A549 (cell line): ENCODE measurements at regions of chr3 and their contacts with region 1.

Region 1: DNA sequence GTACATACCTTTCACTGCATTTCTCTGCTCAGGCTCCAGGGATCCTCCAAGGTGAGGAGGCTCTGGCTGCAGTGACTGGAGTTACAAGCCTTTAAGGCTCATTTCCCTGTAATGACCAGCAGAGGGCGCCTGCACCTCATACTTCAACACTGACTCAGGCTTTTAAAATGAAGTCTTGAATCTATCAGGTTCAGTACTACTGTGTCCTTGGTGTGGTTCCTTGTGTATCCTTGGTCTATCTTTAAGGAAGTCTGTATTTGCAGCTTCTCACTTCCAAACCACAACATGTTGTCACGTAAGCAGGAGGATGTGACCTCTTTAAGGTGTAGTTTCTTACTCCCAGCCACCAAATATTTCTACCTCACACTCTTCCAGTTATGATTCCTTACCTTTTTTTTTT is 122.5 kb upstream of the ZBED2 start:
- DNase-seq: peak; percentile 76 to 88
- ATAC-seq: peak; percentile 92 to 96
- H3K4me3 ChIP-seq: no peak overlapping the region
- H3K27ac ChIP-seq: peak overlapping the region; percentile 65 to 83
- H3K4me1 ChIP-seq: peaks cover 7% of the 10 kb centered on the region
- CTCF ChIP-seq: peak; percentile 96
- EP300 ChIP-seq: no peak
- POLR2A ChIP-seq: no peak
- RAD21 ChIP-seq: peak; percentile 99

Region 2: DNA sequence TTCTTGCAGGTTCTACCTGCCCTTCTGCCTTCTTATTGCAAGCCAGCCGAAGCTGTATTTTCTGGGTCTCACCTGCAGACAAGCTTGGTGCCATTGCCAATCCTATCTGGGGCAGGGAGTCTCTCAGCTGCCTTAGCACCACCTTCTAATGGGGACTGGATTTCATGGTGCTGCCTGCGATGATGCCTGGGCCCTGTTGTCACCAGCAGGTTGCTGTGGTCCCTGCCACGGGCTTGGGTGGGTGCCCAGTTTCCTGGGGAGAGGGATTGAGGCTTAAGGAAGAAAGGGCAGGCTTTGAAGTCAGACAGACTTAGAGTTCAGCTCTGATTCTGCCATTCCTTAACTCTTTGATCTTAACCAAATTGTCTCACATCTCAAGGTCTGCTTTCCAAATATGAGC is 263.1 kb before region 1 on chr3:
- CTCF ChIA-PET with region 1: no interaction called
- POLR2A ChIA-PET with region 1: no interaction called
- DNase-seq: no peak
- ATAC-seq: no peak
- H3K4me3 ChIP-seq: no peak overlapping the region
- H3K27ac ChIP-seq: no peak overlapping the region
- H3K4me1 ChIP-seq: no peaks in the 10 kb centered on the region
- CTCF ChIP-seq: no peak
- EP300 ChIP-seq: no peak
- POLR2A ChIP-seq: no peak
- RAD21 ChIP-seq: no peak

Region 3: DNA sequence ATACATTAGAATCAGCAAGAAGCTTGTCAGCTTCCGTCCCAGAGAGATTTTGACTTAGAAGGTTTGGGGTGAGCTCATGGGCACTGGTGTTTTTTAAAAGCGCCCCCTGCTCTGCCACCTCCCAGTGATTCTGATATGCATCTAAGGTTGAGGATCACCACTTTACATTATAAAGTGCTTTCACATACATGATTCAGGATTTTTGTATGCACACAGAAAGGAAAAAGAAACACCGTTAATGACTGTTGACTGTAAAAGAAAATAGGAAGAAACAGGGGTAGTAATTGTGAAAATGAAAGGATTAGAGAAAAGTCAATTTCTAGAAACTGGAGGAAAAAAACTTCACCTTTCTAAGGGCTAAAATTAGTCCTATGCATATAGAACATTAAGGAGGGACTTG is 17.5 kb before region 1 on chr3:
- CTCF ChIA-PET with region 1: interaction called, 69 read pairs
- POLR2A ChIA-PET with region 1: no interaction called
- DNase-seq: no peak
- ATAC-seq: no peak
- H3K4me3 ChIP-seq: no peak overlapping the region
- H3K27ac ChIP-seq: no peak overlapping the region
- H3K4me1 ChIP-seq: peaks cover 24% of the 10 kb centered on the region
- CTCF ChIP-seq: no peak
- EP300 ChIP-seq: no peak
- POLR2A ChIP-seq: no peak
- RAD21 ChIP-seq: no peak

Region 4: GRCh38 chr3:111768571-111769100 is 51.0 kb after region 1 on chr3:
- CTCF ChIA-PET with region 1: interaction called, 13 read pairs
- POLR2A ChIA-PET with region 1: no interaction called
- DNase-seq: peak; percentile 22 to 81
- ATAC-seq: peak; percentile 74 to 83
- H3K4me3 ChIP-seq: no peak overlapping the region
- H3K27ac ChIP-seq: peak overlapping the region; percentile 61 to 86
- H3K4me1 ChIP-seq: peaks cover 64% of the 10 kb centered on the region
- CTCF ChIP-seq: no peak
- EP300 ChIP-seq: peak in 1 of 2 experiments; percentile 14; a peak in 1 of 5 replicates
- POLR2A ChIP-seq: no peak
- RAD21 ChIP-seq: no peak

Region 5: GRCh38 chr3:111851511-111851954 is 133.9 kb after region 1 on chr3:
- CTCF ChIA-PET with region 1: interaction called, 18 read pairs
- POLR2A ChIA-PET with region 1: no interaction called
- DNase-seq: no peak
- ATAC-seq: peak in 1 of 2 experiments; percentile 51; a peak in 3 of 6 replicates
- H3K4me3 ChIP-seq: no peak overlapping the region
- H3K27ac ChIP-seq: peak overlapping the region; percentile 27 to 72; a peak in 4 of 6 replicates
- H3K4me1 ChIP-seq: peaks cover 45% of the 10 kb centered on the region
- CTCF ChIP-seq: no peak
- EP300 ChIP-seq: no peak
- POLR2A ChIP-seq: no peak
- RAD21 ChIP-seq: no peak

Region 6: DNA sequence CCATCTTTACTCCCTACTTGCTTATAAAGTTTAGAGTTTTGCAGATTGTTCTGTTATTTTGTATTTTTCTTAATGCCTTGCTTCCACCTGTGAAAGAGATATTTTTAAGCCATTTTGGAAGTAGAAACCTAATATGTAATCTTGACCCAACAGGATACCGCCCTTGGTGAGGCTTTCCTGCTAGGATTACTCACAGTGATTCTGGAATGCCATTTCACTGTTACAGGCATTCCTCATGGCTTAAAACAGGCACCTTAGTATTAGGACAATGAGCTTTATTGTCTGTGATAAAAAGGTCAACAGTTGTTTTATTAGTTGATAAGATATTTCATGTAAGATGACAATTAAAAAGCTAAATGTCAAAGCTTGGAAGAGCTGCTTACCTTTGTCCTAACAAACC is 199.7 kb after region 1 on chr3:
- CTCF ChIA-PET with region 1: interaction called, 15 read pairs
- POLR2A ChIA-PET with region 1: no interaction called
- DNase-seq: peak; percentile 46 to 61
- ATAC-seq: peak; percentile 65 to 78; a peak in 5 of 6 replicates
- H3K4me3 ChIP-seq: no peak overlapping the region
- H3K27ac ChIP-seq: peak overlapping the region; percentile 29 to 44; a peak in 3 of 6 replicates
- H3K4me1 ChIP-seq: peaks cover 70% of the 10 kb centered on the region
- CTCF ChIP-seq: no peak
- EP300 ChIP-seq: peak in 1 of 2 experiments; percentile 47; a peak in 1 of 5 replicates
- POLR2A ChIP-seq: no peak
- RAD21 ChIP-seq: no peak

Region 7: DNA sequence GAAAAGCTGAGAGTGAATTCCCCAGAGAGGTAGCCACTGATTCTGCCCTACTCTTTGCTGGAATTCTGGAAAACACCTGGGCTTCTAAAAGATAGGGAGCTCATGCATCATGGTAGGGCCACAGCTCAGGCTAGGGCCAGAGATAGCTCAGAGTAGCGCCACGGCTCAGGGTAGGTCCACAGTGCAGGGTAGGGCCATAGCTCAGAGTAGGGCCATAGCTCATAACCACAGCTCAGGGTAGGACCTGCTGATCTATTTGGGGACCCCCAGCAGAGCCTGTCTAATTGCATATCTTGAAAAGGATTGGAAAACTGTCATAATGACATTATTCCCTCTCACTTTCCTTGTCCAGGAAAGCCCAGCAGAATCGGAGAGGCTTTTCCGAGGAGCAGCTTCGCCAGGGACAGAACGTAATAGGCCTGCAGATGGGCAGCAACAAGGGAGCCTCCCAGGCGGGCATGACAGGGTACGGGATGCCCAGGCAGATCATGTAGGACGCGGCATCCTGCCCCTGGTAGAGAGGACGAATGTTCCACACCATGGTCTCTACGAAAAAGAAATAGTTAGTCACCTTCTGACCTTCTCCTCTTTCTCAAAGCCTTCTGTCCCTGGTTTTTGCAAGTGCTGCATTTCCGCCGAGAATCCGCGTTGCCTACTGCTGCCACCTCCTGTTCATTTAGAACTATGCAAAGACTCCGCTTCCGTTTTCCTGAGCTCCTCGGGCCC is 295.6 kb after region 1 on chr3:
- CTCF ChIA-PET with region 1: interaction called, 23 read pairs
- POLR2A ChIA-PET with region 1: no interaction called
- DNase-seq: peak; percentile 56 to 79
- ATAC-seq: peak; percentile 90 to 96
- H3K4me3 ChIP-seq: no peak overlapping the region
- H3K27ac ChIP-seq: peak overlapping the region in 1 of 2 experiments; percentile 58; a peak in 3 of 6 replicates
- H3K4me1 ChIP-seq: 0 out of 3 replicates have a peak, but pooled peaks cover 5% of the 10 kb centered on the region
- CTCF ChIP-seq: peak; percentile 88
- EP300 ChIP-seq: no peak
- POLR2A ChIP-seq: no peak
- RAD21 ChIP-seq: peak; percentile 82 to 85